ENCODE measurements at regions of chr20 and their contacts with region 1.

Region 1: DNA sequence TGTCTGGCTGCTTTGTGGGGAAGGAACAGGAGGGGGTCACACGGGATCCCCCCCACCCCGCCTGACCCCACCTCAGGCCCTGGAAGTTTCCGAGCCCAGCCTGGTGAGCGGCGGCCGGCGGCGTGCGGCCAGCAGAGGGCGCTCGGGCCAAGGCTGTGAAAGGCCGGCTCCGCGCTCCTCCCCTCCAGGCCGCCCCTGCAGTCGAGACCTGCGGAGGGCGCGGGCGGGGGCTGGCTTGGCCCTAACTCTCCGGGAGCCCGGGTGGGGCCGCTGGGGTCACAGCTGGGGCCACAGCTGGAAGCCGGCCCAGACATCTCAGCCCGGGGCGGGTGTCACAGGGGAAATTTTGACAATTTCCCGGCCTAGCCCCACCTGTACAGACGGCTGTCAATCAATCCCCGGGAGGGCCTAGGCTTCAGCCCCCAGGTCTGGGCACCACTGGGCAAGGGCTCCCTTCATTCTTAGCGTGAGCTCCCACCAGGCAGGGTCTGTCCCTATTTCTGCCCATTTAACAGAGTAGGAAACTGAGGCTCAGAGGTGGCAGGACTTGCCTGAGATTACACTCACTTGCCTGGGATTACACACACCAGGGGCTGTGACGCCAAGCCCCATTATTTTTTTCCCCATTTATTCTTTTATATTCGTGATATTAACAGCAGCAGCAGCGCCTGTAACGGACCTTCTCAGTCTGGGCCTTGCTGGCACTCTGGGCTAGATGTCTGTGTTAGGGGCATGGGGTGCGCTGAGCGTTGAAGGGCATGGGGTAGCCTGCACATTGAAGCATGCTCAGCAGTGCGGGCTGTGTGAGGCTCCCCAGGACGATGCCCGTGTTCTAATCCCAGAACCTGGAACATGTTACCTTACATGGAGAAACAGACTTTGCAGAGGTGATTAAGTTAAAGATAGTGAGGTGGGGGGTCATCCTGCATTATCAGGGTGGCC is 23.0 kb downstream of the ZBP1 start:
- DNase-seq: peak; percentile 79
- ATAC-seq: peak; percentile 85
- H3K4me3 Mint-ChIP-seq: no peak overlapping the region
- H3K27ac Mint-ChIP-seq: no peak overlapping the region
- H3K4me1 Mint-ChIP-seq: peaks cover 2% of the 10 kb centered on the region
- H3K27me3 Mint-ChIP-seq: peaks cover 3% of the 10 kb centered on the region
- CTCF ChIP-seq: peak; percentile 97

Region 2: GRCh38 chr20:57195469-57196100 is 401.7 kb before region 1 on chr20:
- CTCF ChIA-PET with region 1: no interaction called
- POLR2A ChIA-PET with region 1: no interaction called
- intact Hi-C with region 1: no loop called
- DNase-seq: no peak
- ATAC-seq: no peak
- H3K4me3 Mint-ChIP-seq: no peak overlapping the region
- H3K27ac Mint-ChIP-seq: no peak overlapping the region
- H3K4me1 Mint-ChIP-seq: no peaks in the 10 kb centered on the region
- H3K27me3 Mint-ChIP-seq: peaks cover 2% of the 10 kb centered on the region
- CTCF ChIP-seq: no peak

Region 3: GRCh38 chr20:57498425-57499400 is 98.6 kb before region 1 on chr20:
- CTCF ChIA-PET with region 1: interaction called, 16 read pairs
- POLR2A ChIA-PET with region 1: no interaction called
- intact Hi-C with region 1: no loop called
- DNase-seq: peak; percentile 66
- ATAC-seq: peak; percentile 86
- H3K4me3 Mint-ChIP-seq: no peak overlapping the region
- H3K27ac Mint-ChIP-seq: no peak overlapping the region
- H3K4me1 Mint-ChIP-seq: peaks cover 11% of the 10 kb centered on the region
- H3K27me3 Mint-ChIP-seq: peaks cover 30% of the 10 kb centered on the region
- CTCF ChIP-seq: peak; percentile 52

Region 4: GRCh38 chr20:57514273-57514751 is 83.0 kb before region 1 on chr20:
- CTCF ChIA-PET with region 1: interaction called, 20 read pairs
- POLR2A ChIA-PET with region 1: no interaction called
- intact Hi-C with region 1: loop called (anchors 5 kb)
- DNase-seq: peak; percentile 53
- ATAC-seq: no peak
- H3K4me3 Mint-ChIP-seq: no peak overlapping the region
- H3K27ac Mint-ChIP-seq: no peak overlapping the region
- H3K4me1 Mint-ChIP-seq: no peaks in the 10 kb centered on the region
- H3K27me3 Mint-ChIP-seq: peaks cover 7% of the 10 kb centered on the region
- CTCF ChIP-seq: peak; percentile 62

Region 5: GRCh38 chr20:57574965-57575364 is 22.3 kb before region 1 on chr20:
- CTCF ChIA-PET with region 1: no interaction called
- POLR2A ChIA-PET with region 1: no interaction called
- intact Hi-C with region 1: no loop called
- DNase-seq: no peak
- ATAC-seq: no peak
- H3K4me3 Mint-ChIP-seq: no peak overlapping the region
- H3K27ac Mint-ChIP-seq: no peak overlapping the region
- H3K4me1 Mint-ChIP-seq: no peaks in the 10 kb centered on the region
- H3K27me3 Mint-ChIP-seq: peaks cover 8% of the 10 kb centered on the region
- CTCF ChIP-seq: no peak

Region 6: GRCh38 chr20:57628047-57628961 is 31.0 kb after region 1 on chr20:
- CTCF ChIA-PET with region 1: interaction called, 15 read pairs
- POLR2A ChIA-PET with region 1: interaction called, 4 read pairs
- intact Hi-C with region 1: no loop called
- DNase-seq: peak; percentile 78
- ATAC-seq: peak; percentile 75
- H3K4me3 Mint-ChIP-seq: peak overlapping the region; percentile 75
- H3K27ac Mint-ChIP-seq: peak overlapping the region; percentile 97
- H3K4me1 Mint-ChIP-seq: peaks cover 36% of the 10 kb centered on the region
- H3K27me3 Mint-ChIP-seq: no peaks in the 10 kb centered on the region
- CTCF ChIP-seq: no peak

Region 7: DNA sequence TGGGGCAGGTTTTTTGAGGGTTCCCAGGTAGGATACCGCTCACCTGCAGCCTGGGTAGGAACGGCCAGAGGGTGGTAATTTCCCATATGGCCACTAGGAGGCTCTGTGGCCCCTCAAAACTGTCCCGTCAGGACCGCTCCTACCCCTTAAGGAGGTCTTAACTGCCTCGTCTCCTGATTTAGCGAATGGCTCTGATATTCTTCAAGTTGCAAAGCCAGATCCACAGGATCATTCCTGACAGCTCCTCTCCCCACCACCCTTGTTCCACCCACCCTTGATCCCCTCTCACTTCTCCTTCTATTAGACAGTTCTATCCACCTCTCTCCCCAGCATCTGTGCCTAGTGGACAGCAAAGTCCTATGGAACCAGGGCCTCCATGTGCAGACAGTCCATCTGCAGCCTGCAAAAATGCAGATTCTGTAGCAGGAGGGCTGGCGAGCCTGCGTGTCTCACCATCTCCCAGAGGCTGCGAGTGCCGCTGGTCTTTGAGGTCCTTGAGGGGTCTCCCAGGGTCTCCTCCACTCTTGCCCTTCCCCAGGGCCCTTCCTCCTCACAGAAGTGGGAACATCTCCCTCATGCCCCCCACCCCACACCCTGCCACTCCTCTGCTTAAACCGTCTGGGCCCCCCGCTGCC is 57.2 kb after region 1 on chr20:
- CTCF ChIA-PET with region 1: interaction called, 8 read pairs
- POLR2A ChIA-PET with region 1: no interaction called
- intact Hi-C with region 1: loop called (anchors 10 kb)
- DNase-seq: peak; percentile 74
- ATAC-seq: peak; percentile 85
- H3K4me3 Mint-ChIP-seq: no peak overlapping the region
- H3K27ac Mint-ChIP-seq: no peak overlapping the region
- H3K4me1 Mint-ChIP-seq: peaks cover 26% of the 10 kb centered on the region
- H3K27me3 Mint-ChIP-seq: no peaks in the 10 kb centered on the region
- CTCF ChIP-seq: peak; percentile 88

Region 8: GRCh38 chr20:57818418-57819181 is 221.3 kb after region 1 on chr20:
- CTCF ChIA-PET with region 1: no interaction called
- POLR2A ChIA-PET with region 1: no interaction called
- intact Hi-C with region 1: no loop called
- DNase-seq: no peak
- ATAC-seq: no peak
- H3K4me3 Mint-ChIP-seq: no peak overlapping the region
- H3K27ac Mint-ChIP-seq: no peak overlapping the region
- H3K4me1 Mint-ChIP-seq: no peaks in the 10 kb centered on the region
- H3K27me3 Mint-ChIP-seq: peaks cover 4% of the 10 kb centered on the region
- CTCF ChIP-seq: no peak

Region 9: GRCh38 chr20:58179432-58180099 is 582.3 kb after region 1 on chr20:
- CTCF ChIA-PET with region 1: interaction called, 12 read pairs
- POLR2A ChIA-PET with region 1: no interaction called
- intact Hi-C with region 1: loop called (anchors 10 kb)
- DNase-seq: peak; percentile 64
- ATAC-seq: peak; percentile 94
- H3K4me3 Mint-ChIP-seq: peak overlapping the region; percentile 11
- H3K27ac Mint-ChIP-seq: no peak overlapping the region
- H3K4me1 Mint-ChIP-seq: peaks cover 5% of the 10 kb centered on the region
- H3K27me3 Mint-ChIP-seq: peaks cover 26% of the 10 kb centered on the region
- CTCF ChIP-seq: peak; percentile 98

Measured in activated CD8-positive, alpha-beta T cell treated with anti-CD3 and anti-CD28 coated beads for 36 hours (primary cell).